Activated CD4-positive, alpha-beta memory T cell treated with anti-CD3 and anti-CD28 coated beads for 36 hours (primary cell): ENCODE measurements at regions of chrX and their contacts with region 1.

Region 1: DNA sequence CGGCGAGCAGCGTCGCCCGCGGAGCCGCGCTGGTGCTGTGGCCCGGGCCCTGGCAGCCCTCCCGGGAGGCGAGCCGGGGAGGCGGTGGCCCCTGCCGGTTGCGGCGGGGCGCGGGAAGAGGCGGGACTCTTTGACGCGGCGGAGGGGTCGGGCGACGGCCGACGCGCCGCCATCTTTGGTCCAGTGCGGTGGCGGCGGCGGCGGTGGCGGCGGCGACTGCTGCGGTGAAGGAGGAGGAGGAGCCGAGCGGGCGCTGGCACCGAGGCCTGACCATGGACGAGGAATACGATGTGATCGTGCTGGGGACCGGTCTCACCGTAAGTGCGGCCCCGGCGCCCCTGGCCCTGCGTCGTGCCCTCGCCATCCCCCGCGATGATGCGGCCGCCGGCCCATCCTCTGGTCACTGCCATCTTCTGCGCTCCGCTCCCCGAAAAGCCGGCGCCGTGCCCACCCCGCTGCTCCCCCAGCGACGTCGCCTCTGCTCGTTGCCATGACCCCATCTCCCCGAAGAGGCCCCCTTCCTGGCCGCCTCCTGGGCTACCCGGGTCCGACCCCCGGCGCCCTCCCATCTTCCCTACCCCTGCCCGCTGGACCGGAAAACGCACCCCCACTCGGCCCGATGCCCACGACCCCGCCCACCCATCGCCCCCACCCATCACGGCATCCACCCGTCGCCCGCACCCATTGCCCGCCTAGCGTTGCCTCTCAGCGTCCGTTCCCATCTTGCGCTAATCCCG is at the start of gene GDI1:
- DNase-seq: peak; percentile 61
- H3K4me3 Mint-ChIP-seq: peak within 1 kb of the TSS; percentile 82
- H3K27ac Mint-ChIP-seq: peak within 1 kb of the TSS; percentile 88
- H3K4me1 Mint-ChIP-seq: peaks cover 24% of the 10 kb centered on the region
- H3K27me3 Mint-ChIP-seq: no peaks in the 10 kb centered on the region
- total RNA-seq, gene GDI1: 119 to 121 TPM

Region 2: GRCh38 chrX:153794018-153794896 is 642.9 kb before region 1 on chrX and contains the starts of genes IDH3G and SSR4:
- CTCF ChIA-PET with region 1: no interaction called
- POLR2A ChIA-PET with region 1: no interaction called
- intact Hi-C with region 1: loop called (anchors 5 kb)
- DNase-seq: peak; percentile 95
- H3K4me3 Mint-ChIP-seq: peak within 1 kb of the TSS; percentile 90
- H3K27ac Mint-ChIP-seq: peak within 1 kb of the TSS; percentile 80
- H3K4me1 Mint-ChIP-seq: peaks cover 18% of the 10 kb centered on the region
- H3K27me3 Mint-ChIP-seq: no peaks in the 10 kb centered on the region
- total RNA-seq, gene IDH3G: 45.9 to 51.5 TPM
- total RNA-seq, gene SSR4: 194 to 203 TPM

Region 3: GRCh38 chrX:154348114-154348531 is 89.0 kb before region 1 on chrX:
- CTCF ChIA-PET with region 1: no interaction called
- POLR2A ChIA-PET with region 1: no interaction called
- intact Hi-C with region 1: no loop called
- DNase-seq: no peak
- H3K4me3 Mint-ChIP-seq: no peak overlapping the region
- H3K27ac Mint-ChIP-seq: peak overlapping the region; percentile 49
- H3K4me1 Mint-ChIP-seq: peaks cover 29% of the 10 kb centered on the region
- H3K27me3 Mint-ChIP-seq: no peaks in the 10 kb centered on the region

Region 4: DNA sequence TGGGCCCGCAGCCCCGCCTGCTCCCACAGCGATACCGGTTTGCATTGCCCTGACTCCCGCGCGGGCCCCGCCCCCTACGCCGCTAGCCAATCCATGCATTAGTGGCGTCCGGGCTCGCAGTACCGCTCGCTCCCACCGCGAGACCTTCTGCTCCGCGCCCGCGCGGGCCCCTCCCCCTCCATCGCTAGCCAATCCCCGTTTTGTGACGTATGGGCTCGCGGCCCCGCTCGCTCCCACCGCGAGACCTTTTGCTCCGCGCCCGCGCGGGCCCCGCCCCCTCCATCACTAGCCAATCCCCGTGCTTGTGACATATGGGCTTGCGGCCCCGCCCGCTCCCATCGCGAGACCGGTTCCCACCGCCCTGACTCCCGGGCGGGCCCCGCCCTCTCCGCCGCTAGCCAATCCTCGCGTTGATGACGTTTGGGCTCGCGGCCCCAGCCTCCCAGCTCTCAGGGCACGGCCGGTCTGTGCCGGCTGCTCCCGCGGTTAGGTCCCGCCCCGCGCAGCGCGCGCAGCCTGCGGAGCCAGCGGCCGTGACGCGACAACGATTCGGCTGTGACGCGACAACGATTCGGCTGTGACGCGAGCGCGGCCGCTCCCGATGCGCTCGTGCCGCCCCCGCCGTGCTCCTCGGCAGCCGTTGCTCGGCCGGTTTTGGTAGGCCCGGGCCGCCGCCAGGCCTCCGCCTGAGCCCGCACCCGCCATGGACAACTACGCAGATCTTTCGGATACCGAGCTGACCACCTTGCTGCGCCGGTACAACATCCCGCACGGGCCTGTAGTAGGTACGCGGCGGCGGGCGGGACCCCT is 58.2 kb before region 1 on chrX and contains the start of gene EMD:
- CTCF ChIA-PET with region 1: no interaction called
- POLR2A ChIA-PET with region 1: no interaction called
- intact Hi-C with region 1: loop called (anchors 5 kb)
- DNase-seq: peak; percentile 97
- H3K4me3 Mint-ChIP-seq: peak within 1 kb of the TSS; percentile 83
- H3K27ac Mint-ChIP-seq: peak within 1 kb of the TSS; percentile 87
- H3K4me1 Mint-ChIP-seq: peaks cover 24% of the 10 kb centered on the region
- H3K27me3 Mint-ChIP-seq: no peaks in the 10 kb centered on the region
- total RNA-seq, gene EMD: 75.8 to 79.1 TPM

Region 5: DNA sequence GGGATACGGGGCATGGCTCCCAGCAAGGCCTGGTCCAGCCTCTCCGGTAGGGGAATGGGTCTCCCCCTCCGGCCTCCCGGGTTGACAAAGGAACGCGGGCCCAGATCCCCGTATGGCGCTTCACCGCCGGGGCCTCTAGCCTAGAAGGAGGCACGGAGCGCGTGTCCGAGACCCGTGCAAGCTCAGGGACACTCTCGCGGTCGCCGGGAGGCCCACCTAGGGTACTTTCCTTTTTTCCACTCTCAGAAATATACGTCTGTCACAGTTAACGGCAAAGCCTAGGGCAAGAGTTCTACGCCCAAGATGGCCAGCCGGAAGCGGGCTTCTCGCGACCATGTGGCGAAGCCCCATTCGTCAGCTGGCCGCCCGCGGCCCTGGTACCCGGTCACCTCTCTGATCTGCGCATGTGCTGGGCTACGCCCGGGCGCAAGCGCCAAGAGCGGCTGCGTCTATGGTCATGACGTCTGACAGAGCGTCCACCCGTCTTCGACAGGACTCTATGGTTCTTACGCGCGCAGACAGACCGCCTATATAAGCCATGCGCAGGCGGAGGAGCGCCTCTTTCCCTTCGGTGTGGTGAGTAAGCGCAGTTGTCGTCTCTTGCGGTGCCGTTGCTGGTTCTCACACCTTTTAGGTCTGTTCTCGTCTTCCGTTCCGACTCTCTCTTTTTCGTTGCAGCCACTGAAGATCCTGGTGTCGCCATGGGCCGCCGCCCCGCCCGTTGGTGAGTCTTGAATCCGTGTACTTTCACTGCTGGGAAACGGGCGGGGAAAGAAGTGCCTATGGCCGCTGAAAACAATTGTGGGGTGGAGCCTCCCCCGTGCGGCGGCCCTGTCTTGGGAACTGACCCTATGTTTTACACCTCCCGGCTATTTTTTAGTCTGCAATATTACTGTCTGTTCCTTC is 39.1 kb before region 1 on chrX and contains the start of gene RPL10:
- CTCF ChIA-PET with region 1: no interaction called
- POLR2A ChIA-PET with region 1: interaction called, 3 read pairs
- intact Hi-C with region 1: loop called (anchors 5 kb)
- DNase-seq: peak; percentile 95
- H3K4me3 Mint-ChIP-seq: peak within 1 kb of the TSS; percentile 91
- H3K27ac Mint-ChIP-seq: peak within 1 kb of the TSS; percentile 100
- H3K4me1 Mint-ChIP-seq: peaks cover 7% of the 10 kb centered on the region
- H3K27me3 Mint-ChIP-seq: no peaks in the 10 kb centered on the region
- total RNA-seq, gene RPL10: 3,597 to 3,654 TPM

Region 6: GRCh38 chrX:154457491-154458113 is 20.5 kb after region 1 on chrX:
- CTCF ChIA-PET with region 1: no interaction called
- POLR2A ChIA-PET with region 1: no interaction called
- intact Hi-C with region 1: loop called (anchors 2 kb)
- DNase-seq: peak; percentile 60
- H3K4me3 Mint-ChIP-seq: peak overlapping the region; percentile 82
- H3K27ac Mint-ChIP-seq: peak overlapping the region; percentile 74
- H3K4me1 Mint-ChIP-seq: peaks cover 7% of the 10 kb centered on the region
- H3K27me3 Mint-ChIP-seq: no peaks in the 10 kb centered on the region